ENCODE measurements at regions of chr2 and their contacts with region 1.

Region 1: GRCh38 chr2:3238951-3239841 is 138.4 kb downstream of the EIPR1 start:
- DNase-seq: peak; percentile 77
- H3K4me3 Mint-ChIP-seq: no peak overlapping the region
- H3K27ac Mint-ChIP-seq: no peak overlapping the region
- H3K4me1 Mint-ChIP-seq: peaks cover 30% of the 10 kb centered on the region
- H3K27me3 Mint-ChIP-seq: no peaks in the 10 kb centered on the region

Region 2: GRCh38 chr2:3223080-3223923 is 15.9 kb before region 1 on chr2:
- intact Hi-C with region 1: loop called (anchors 1 kb)
- DNase-seq: peak; percentile 91
- H3K4me3 Mint-ChIP-seq: peak overlapping the region; percentile 52
- H3K27ac Mint-ChIP-seq: peak overlapping the region; percentile 94
- H3K4me1 Mint-ChIP-seq: peaks cover 42% of the 10 kb centered on the region
- H3K27me3 Mint-ChIP-seq: no peaks in the 10 kb centered on the region

Measured in activated CD4-positive, alpha-beta T cell treated with anti-CD3 and anti-CD28 coated beads, Interleukin-2, amount 10 ng/mL, durations not matched to agents 24 days and 14 days (primary cell).